OCI-LY7 (cell line): ENCODE measurements at regions of chr16 and their contacts with region 1.

Region 1: GRCh38 chr16:52191531-52192134 is 355.3 kb downstream of the TOX3 start:
- DNase-seq: peak; percentile 54
- H3K4me3 ChIP-seq: no peak overlapping the region
- H3K27ac ChIP-seq: no peak overlapping the region
- H3K4me1 ChIP-seq: no peaks in the 10 kb centered on the region
- CTCF ChIP-seq: peak; percentile 96

Region 2: DNA sequence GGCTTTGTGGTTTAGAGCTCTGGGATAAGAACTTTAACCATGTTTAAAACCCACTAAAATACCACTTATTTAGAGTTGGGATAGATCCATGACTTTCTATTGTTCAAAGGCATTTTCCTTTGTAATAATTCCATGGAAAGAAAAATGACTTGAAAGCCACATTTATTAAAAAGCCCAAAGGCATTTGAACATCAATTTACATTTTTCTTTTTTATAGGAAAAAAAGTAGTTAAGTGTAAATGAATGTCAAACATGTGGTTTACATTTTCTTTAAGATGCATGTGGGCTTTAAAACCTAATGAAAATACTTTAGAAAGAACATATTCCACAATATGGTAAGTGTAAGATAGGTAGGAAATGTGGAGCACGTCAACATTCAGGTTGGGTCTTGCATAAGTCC is 87.8 kb before region 1 on chr16:
- CTCF ChIA-PET with region 1: no interaction called
- POLR2A ChIA-PET with region 1: no interaction called
- intact Hi-C with region 1: no loop called
- DNase-seq: no peak
- H3K4me3 ChIP-seq: no peak overlapping the region
- H3K27ac ChIP-seq: no peak overlapping the region
- H3K4me1 ChIP-seq: no peaks in the 10 kb centered on the region
- CTCF ChIP-seq: no peak

Region 3: DNA sequence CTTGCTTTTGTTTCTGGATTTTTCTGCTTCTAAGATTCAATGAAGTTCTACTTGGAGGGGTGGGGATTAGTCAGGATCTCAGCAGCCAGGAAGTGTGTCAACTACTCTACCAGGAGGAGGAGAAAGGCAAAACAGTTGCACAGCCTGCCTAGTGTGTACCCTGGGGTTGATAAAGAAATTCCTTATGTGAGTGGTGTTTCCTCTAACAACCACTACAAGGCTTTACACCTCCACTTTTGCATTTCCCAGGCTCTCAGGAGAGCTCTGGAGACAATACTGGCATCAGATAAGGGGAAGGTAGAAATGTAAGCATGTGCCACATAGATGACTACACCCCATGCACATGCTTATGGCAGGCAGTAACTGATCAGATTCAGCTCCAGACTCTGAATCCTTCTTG is 180.7 kb after region 1 on chr16:
- CTCF ChIA-PET with region 1: no interaction called
- POLR2A ChIA-PET with region 1: no interaction called
- intact Hi-C with region 1: no loop called
- DNase-seq: no peak
- H3K4me3 ChIP-seq: no peak overlapping the region
- H3K27ac ChIP-seq: no peak overlapping the region
- H3K4me1 ChIP-seq: no peaks in the 10 kb centered on the region
- CTCF ChIP-seq: no peak

Region 4: DNA sequence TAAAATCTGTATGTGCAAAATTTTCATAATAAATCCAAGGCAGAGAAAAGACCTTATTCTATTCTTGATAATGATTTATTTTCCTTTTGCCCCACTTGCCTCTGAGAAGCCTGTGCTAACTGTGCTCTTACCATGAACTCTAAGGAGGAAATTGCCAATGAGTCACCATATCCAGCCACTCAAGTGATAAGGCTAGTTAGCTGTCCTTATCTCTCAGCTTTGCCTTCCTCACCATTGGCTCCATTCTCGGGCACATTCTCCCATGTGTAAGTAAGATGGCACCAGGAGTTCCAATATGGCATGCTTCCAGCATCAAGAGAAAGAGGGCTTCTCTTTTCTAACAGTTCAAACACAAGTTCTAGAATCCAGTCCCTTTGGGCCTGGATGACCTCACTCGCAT is 212.9 kb after region 1 on chr16:
- CTCF ChIA-PET with region 1: no interaction called
- POLR2A ChIA-PET with region 1: no interaction called
- intact Hi-C with region 1: no loop called
- DNase-seq: no peak
- H3K4me3 ChIP-seq: no peak overlapping the region
- H3K27ac ChIP-seq: no peak overlapping the region
- H3K4me1 ChIP-seq: no peaks in the 10 kb centered on the region
- CTCF ChIP-seq: no peak

Region 5: DNA sequence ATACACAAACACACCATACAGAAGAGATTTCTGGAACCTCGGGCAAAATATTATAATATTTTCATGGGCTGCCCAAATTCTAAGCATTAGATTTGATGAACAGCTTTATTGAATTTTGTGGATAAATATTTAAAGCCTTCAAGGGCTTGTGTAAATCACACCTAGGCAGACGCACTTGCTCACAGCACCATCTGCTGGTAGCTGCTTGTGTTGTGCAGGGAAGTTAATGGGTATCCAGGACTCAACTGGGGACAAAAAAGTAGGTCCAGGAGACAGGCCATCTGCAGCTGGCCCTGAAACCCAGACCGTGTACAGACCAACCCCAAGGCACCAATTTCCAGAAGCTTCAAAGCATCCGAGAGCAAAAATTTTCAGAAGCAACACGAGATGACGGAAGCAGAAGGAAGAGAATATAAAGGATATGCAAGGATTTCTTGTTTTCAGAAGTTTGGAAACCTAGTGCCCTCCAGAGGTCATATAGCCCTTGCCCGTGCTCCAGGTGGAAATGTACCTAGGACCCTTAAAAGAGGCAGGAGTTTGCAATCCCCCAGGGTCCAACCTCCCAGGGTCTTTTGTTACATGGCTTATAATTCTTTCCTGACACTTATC is 721.0 kb after region 1 on chr16:
- CTCF ChIA-PET with region 1: interaction called, 3 read pairs
- POLR2A ChIA-PET with region 1: interaction called, 3 read pairs
- intact Hi-C with region 1: loop called (anchors 2 kb)
- DNase-seq: peak; percentile 64
- H3K4me3 ChIP-seq: no peak overlapping the region
- H3K27ac ChIP-seq: no peak overlapping the region
- H3K4me1 ChIP-seq: no peaks in the 10 kb centered on the region
- CTCF ChIP-seq: peak; percentile 94

Region 6: DNA sequence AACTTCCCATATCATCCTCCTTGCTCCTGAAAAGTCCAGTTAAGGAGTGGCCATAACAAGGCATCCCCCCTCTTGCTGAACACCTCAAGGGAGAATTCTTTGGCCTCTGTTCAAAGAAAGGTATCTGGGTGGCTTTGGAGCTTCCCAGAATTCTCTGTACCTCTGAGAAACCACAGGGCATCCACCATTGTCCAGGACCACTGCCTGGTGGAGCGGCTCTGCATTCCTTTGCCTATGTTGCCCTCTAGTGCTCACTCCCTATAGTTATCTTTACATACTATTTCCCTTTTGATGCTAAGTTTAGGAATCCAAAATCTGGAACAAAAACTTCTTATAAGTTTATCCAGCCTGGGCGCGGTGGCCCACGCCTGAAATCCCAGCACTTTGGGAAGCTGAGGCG is 830.7 kb after region 1 on chr16:
- CTCF ChIA-PET with region 1: no interaction called
- POLR2A ChIA-PET with region 1: no interaction called
- intact Hi-C with region 1: loop called (anchors 2 kb)
- DNase-seq: peak; percentile 25
- H3K4me3 ChIP-seq: no peak overlapping the region
- H3K27ac ChIP-seq: no peak overlapping the region
- H3K4me1 ChIP-seq: no peaks in the 10 kb centered on the region
- CTCF ChIP-seq: peak; percentile 69